ENCODE measurements at regions of chr15 and their contacts with region 1.

Region 1: DNA sequence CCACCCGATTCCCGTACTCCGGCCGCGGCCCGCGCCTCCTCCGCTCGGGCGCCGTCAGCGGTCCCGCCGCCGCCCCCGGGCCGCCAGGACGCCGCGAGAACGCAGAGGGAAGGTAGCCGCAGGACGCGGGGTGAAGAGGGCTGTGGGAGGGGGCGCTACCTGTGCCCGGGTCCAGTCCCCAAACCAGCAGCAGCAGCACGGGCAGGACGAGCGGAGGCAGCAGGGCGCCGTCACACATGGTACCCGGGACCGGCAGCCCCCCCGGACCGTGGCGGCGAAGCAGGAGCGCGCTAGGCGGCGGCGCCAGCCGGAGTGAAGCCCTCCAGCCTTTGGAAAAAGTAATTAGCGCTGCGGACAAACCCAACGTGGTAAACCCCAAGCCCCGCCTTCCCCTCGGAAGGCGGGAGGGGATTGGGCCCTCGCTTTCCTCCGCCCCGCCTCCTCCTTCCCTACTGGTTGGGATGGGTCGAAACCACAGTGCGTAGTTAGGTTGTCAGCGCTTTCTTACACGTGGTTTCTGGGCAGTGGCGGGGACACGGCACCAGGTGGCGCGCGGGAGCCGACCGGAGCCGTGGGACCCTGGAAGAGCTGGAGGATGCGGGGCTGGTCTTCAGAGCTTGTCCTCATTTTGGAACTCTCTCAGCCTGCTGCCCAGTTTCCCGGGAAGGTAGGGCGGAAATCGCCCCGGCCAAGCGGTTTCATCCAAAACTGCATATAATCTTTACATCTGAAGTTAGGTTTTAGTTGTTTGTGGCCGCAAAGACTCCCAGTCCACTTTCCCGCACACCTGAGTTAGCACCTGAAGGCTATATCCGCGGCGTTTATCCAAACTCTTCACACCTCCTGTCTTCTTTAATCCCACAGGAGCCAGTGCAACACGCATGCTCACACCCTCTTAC is at the start of gene ADAMTS17:
- DNase-seq: peak; percentile 96
- ATAC-seq: peak; percentile 95
- H3K4me3 Mint-ChIP-seq: peak within 1 kb of the TSS; percentile 46
- H3K27ac Mint-ChIP-seq: no peak within 1 kb of the TSS
- H3K4me1 Mint-ChIP-seq: peaks cover 28% of the 10 kb centered on the region
- H3K27me3 Mint-ChIP-seq: peaks cover 19% of the 10 kb centered on the region
- total RNA-seq, gene ADAMTS17: 5.1 to 6.0 TPM

Region 2: DNA sequence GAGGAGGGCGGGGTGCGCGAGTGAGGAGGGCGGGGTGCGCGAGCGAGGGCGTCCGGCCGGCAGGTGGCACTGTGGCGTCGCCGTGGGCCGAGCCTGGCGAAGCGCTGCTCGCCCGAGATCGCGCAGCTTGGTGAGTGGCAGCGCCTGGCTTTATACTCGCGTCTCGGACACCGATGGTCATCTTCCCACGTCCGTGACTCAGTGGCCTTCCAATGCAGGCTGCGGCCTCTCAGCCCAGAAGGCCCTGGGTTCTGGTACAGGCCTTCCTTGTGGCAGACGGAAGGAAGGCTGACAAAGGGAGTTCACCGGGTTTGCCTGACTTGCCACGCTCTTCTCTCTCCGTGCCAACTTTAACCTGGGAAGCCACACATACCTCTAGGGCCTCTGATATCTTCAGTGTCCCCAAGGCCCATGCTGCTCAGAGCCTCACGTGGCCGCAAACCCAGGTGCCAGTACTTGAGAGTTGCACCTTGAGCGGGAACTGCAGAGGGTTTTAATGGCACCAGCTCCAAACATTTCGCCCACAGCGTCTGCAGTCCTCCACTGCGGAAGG is 413.4 kb before region 1 on chr15:
- CTCF ChIA-PET with region 1: interaction called, 83 read pairs
- POLR2A ChIA-PET with region 1: interaction called, 4 read pairs
- DNase-seq: peak; percentile 89
- ATAC-seq: peak; percentile 95
- H3K4me3 Mint-ChIP-seq: peak overlapping the region; percentile 82
- H3K27ac Mint-ChIP-seq: peak overlapping the region; percentile 80
- H3K4me1 Mint-ChIP-seq: peaks cover 11% of the 10 kb centered on the region
- H3K27me3 Mint-ChIP-seq: peaks cover 26% of the 10 kb centered on the region

Region 3: GRCh38 chr15:99961011-99961441 is 380.9 kb before region 1 on chr15:
- CTCF ChIA-PET with region 1: interaction called, 12 read pairs
- POLR2A ChIA-PET with region 1: no interaction called
- DNase-seq: no peak
- ATAC-seq: no peak
- H3K4me3 Mint-ChIP-seq: no peak overlapping the region
- H3K27ac Mint-ChIP-seq: no peak overlapping the region
- H3K4me1 Mint-ChIP-seq: no peaks in the 10 kb centered on the region
- H3K27me3 Mint-ChIP-seq: peaks cover 4% of the 10 kb centered on the region

Region 4: DNA sequence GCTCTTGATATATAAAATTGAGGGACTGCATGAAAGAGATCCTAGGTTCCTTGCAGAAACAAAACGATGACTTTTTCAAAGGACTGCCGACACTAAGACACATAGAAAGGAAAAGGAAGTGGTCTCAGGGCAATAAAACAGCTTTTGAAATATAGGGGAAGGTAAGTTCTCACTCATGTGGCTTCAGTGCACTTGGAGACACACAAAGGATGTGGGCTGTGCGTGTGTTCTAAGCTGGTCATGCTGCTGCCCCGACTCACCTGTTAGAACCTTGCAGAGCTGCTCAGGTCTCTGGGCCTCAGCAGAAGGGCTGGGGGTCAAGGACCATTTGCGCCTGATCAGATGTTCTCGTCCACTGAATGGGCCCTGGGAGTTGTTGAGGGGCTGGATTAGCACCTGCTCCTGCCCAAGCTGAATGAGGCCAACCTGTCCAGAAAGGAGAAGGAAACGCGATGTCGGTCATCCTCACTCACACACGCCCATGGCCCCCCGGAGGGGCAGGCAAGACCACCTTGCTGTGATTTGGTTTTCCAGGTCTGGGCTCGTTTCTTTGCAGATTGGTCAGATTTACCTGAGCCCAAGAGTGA is 11.2 kb before region 1 on chr15:
- CTCF ChIA-PET with region 1: interaction called, 148 read pairs
- POLR2A ChIA-PET with region 1: interaction called, 13 read pairs
- DNase-seq: peak; percentile 78
- ATAC-seq: peak; percentile 91
- H3K4me3 Mint-ChIP-seq: peak overlapping the region; percentile 63
- H3K27ac Mint-ChIP-seq: peak overlapping the region; percentile 92
- H3K4me1 Mint-ChIP-seq: peaks cover 73% of the 10 kb centered on the region
- H3K27me3 Mint-ChIP-seq: no peaks in the 10 kb centered on the region

Region 5: GRCh38 chr15:100572362-100572983 is 230.6 kb after region 1 on chr15:
- CTCF ChIA-PET with region 1: interaction called, 10 read pairs
- POLR2A ChIA-PET with region 1: no interaction called
- DNase-seq: no peak
- ATAC-seq: no peak
- H3K4me3 Mint-ChIP-seq: peak overlapping the region; percentile 53
- H3K27ac Mint-ChIP-seq: peak overlapping the region; percentile 82
- H3K4me1 Mint-ChIP-seq: peaks cover 39% of the 10 kb centered on the region
- H3K27me3 Mint-ChIP-seq: no peaks in the 10 kb centered on the region

Measured in activated CD8-positive, alpha-beta T cell treated with anti-CD3 and anti-CD28 coated beads, Interleukin-2, amount 10 ng/mL, durations not matched to agents 7 days and 5 days (primary cell).